GM23248 (cell line): ENCODE measurements at regions of chr9 and their contacts with region 1.

Region 1: GRCh38 chr9:122350638-122351355 is 20.0 kb upstream of the PTGS1 start:
- DNase-seq: peak; percentile 81
- H3K4me3 ChIP-seq: no peak overlapping the region
- H3K27ac ChIP-seq: no peak overlapping the region
- H3K4me1 ChIP-seq: no peaks in the 10 kb centered on the region
- H3K27me3 ChIP-seq: no peaks in the 10 kb centered on the region

Region 2: GRCh38 chr9:122092611-122093506 is 257.9 kb before region 1 on chr9 and contains the start of gene TTLL11:
- in situ Hi-C with region 1: loop called (anchors 10 kb)
- DNase-seq: peak; percentile 99
- H3K4me3 ChIP-seq: peak within 1 kb of the TSS; percentile 80
- H3K27ac ChIP-seq: peak within 1 kb of the TSS; percentile 49
- H3K4me1 ChIP-seq: peaks cover 16% of the 10 kb centered on the region
- H3K27me3 ChIP-seq: no peaks in the 10 kb centered on the region
- total RNA-seq, gene TTLL11: 6.3 and 6.4 TPM in 2 replicates

Region 3: DNA sequence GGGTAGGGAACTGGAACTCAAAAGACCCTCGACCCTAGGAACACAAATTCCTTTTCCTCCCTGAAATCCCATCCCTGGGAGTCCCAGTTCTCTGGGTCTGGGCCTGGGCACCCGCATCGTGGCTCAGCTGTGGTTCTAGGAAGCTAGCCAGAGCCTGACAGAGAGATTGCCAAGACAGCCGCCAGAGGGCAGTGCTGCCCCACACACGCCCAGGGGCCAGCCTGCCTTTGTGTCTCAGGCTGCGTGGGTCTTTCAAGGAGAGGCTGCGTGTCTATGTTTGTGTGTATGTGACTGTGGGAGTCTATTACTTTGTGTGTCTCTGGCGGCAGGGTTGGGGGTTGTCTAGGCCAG is 225.7 kb before region 1 on chr9:
- in situ Hi-C with region 1: loop called (anchors 10 kb)
- DNase-seq: peak; percentile 90
- H3K4me3 ChIP-seq: no peak overlapping the region
- H3K27ac ChIP-seq: no peak overlapping the region
- H3K4me1 ChIP-seq: peaks cover 12% of the 10 kb centered on the region
- H3K27me3 ChIP-seq: no peaks in the 10 kb centered on the region

Region 4: DNA sequence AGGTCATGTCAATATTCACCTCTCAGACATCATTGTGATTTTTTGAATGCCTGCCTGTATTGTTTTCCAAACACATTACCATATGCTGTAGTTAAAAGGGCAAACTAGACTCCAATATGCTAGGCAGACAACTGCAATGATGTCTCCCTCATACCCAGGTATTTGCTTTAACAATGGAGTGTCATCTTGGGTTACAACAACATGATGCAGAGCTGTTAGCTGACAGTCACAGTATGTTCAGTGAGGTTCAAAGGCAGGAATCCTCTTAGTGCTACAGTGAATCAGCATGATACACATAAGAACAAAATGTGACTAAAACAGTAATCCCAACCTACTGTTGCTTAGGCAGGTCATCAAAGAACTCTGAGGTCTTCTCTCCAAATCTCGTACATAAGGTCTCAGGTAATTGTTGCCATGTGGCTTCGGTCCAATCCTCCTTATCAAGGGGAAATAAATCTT is 102.9 kb after region 1 on chr9:
- in situ Hi-C with region 1: loop called (anchors 10 kb)
- DNase-seq: peak; percentile 63
- H3K4me3 ChIP-seq: no peak overlapping the region
- H3K27ac ChIP-seq: no peak overlapping the region
- H3K4me1 ChIP-seq: no peaks in the 10 kb centered on the region
- H3K27me3 ChIP-seq: no peaks in the 10 kb centered on the region

Region 5: DNA sequence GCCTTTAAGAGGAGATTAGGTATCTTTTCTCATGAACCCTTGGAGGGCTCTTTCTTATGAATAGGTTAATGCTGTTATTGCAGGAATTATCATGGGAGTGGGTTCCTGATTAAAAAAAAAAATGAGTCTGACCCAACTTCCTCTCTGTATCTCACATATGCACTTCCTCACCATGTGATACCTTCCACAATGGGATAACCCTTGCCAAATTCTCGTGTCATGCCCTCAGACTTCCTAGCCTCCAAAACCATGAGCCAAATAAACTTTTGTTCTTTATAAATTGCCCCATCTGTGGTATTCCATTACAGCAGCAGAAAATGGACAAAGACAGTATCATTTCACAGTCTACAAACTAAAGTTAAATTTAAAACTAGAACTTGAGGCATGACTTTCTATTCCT is 305.6 kb after region 1 on chr9:
- in situ Hi-C with region 1: no loop called
- DNase-seq: no peak
- H3K4me3 ChIP-seq: no peak overlapping the region
- H3K27ac ChIP-seq: no peak overlapping the region
- H3K4me1 ChIP-seq: no peaks in the 10 kb centered on the region
- H3K27me3 ChIP-seq: no peaks in the 10 kb centered on the region

Region 6: GRCh38 chr9:122810306-122810946 is 459.6 kb after region 1 on chr9:
- in situ Hi-C with region 1: loop called (anchors 25 kb)
- DNase-seq: peak; percentile 79
- H3K4me3 ChIP-seq: no peak overlapping the region
- H3K27ac ChIP-seq: no peak overlapping the region
- H3K4me1 ChIP-seq: peaks cover 7% of the 10 kb centered on the region; the same call in 1 of the 2 replicates
- H3K27me3 ChIP-seq: no peaks in the 10 kb centered on the region